ENCODE measurements at regions of chr1 and their contacts with region 1.

Region 1: DNA sequence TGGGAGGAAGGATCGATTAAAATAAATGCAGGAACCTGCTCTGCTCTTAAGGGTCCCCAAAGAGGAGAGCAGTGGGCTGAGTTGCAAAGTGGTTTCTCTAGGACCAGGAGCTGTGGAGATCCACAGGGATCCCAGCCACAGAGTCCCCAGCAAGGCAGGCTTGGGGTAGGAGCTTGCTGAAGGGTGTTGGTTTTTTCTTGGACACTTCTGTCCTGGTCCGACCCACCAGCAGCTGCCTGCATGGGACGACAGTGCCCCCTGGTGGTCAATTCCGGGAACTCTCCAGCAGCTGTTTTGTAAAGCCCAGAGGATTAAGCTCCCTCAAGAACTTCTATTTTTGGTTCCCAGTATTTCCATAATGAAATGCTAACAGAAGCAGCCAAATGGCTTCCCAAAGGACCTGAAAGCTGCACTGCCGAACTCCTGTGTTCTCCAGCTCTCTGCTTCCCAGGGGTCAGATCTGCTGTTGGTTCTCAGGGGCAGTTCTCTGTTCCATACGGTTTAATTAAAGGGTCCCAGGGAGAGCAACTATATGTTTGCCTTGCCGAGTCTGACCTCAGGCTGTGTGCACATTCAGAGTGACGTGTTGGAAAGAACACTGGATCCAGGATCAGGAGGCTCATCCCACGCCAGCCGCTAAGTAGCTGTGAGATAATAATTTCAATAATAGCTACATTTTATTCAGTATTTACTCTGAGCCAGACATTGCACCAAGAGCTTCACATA is 23.2 kb downstream of the NENF start:
- DNase-seq: peak; percentile 82 to 92
- H3K4me3 ChIP-seq: no peak overlapping the region
- H3K4me3 Mint-ChIP-seq: no peak overlapping the region
- H3K27ac Mint-ChIP-seq: no peak overlapping the region
- H3K4me1 ChIP-seq: peaks cover 3% of the 10 kb centered on the region; the same call in 1 of the 2 replicates
- H3K4me1 Mint-ChIP-seq: peaks cover 15% of the 10 kb centered on the region
- H3K27me3 ChIP-seq: no peaks in the 10 kb centered on the region
- H3K27me3 Mint-ChIP-seq: no peaks in the 10 kb centered on the region
- CTCF ChIP-seq: peak; percentile 98

Region 2: DNA sequence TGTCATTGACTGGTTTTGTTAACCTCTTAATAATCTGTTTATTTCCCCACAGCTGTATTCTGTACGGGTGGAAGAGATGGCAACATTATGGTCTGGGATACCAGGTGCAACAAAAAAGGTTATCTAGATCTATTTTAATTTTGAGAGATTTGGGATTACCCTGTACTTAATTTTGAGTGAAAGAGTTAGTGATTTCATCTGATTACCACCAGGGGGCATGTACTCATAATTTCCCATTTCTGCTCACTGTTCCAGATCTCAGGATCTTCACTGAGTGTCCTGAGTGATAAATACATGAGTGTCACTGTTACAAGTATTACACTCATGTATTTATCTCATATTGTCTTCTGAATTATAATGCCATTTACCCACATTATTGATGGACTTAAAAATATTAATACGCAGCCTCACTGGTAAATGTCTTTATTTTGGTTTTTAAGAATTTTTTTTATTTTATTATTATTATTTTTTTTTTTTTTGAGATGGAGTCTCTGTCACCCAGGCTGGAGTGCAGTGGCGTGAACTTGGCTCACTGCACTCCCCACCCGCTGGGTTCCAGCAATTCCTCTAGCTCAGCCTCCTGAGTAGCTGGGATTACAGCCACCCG is 393.0 kb before region 1 on chr1:
- CTCF ChIA-PET with region 1: interaction called, 22 read pairs
- POLR2A ChIA-PET with region 1: no interaction called
- intact Hi-C with region 1: loop called (anchors 1 kb)
- DNase-seq: peak in 1 of 2 experiments; percentile 13
- H3K4me3 ChIP-seq: no peak overlapping the region
- H3K4me3 Mint-ChIP-seq: no peak overlapping the region
- H3K27ac Mint-ChIP-seq: no peak overlapping the region
- H3K4me1 ChIP-seq: no peaks in the 10 kb centered on the region
- H3K4me1 Mint-ChIP-seq: no peaks in the 10 kb centered on the region
- H3K27me3 ChIP-seq: no peaks in the 10 kb centered on the region
- H3K27me3 Mint-ChIP-seq: no peaks in the 10 kb centered on the region
- CTCF ChIP-seq: peak; percentile 63 to 64

Region 3: DNA sequence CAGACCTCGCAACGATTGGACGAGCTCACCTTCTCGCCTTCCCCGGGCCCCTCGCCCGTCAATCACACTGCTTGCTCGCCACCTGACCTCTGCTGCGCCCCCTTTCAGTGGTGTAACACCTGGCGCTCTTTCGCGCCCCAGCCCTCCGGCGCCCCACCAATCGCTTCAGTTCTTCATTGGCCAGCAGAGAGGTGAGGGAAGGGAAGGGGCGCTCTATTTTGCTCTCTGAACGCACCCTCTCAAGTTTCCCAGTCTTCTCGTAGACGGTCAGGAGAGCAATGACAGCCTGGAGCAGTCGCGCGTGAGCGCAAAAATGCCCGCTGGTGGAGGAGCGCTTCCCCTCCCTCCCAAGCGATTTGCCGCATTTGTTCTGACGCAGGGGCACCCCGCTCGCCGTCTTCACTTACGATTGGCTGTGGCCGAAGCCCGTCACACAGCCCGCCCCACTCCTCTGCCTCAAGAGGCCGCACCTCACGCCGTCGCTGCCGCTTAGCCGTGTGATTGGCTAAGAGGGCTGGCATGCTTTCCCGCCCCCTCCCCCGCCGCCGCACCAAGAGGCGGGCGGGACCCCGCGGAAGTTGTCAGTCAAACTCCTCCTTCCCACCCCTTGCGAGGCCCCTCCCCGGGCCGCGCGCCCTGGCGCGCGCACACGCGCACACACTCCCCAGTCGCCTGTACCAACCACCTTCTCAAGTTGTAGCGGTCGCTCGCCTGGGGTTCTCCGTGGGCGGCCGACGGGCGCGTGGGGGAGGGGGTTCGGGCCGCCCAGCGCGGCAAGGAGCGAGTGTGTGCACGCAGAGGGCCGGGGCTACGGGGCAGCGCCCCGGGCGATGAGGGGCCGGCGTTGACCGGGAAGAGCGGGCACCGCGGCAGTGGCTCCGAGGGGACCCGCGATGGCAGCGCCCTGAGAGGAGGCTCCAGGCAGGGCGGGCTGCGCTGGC is 171.0 kb before region 1 on chr1 and contains the start of gene PPP2R5A:
- CTCF ChIA-PET with region 1: interaction called, 5 read pairs
- POLR2A ChIA-PET with region 1: no interaction called
- intact Hi-C with region 1: loop called (anchors 5 kb)
- DNase-seq: peak; percentile 99
- H3K4me3 ChIP-seq: peak within 1 kb of the TSS; percentile 57
- H3K4me3 Mint-ChIP-seq: peak within 1 kb of the TSS; percentile 95
- H3K27ac Mint-ChIP-seq: peak within 1 kb of the TSS; percentile 89
- H3K4me1 ChIP-seq: peaks cover 21% of the 10 kb centered on the region
- H3K4me1 Mint-ChIP-seq: peaks cover 13% of the 10 kb centered on the region
- H3K27me3 ChIP-seq: no peaks in the 10 kb centered on the region
- H3K27me3 Mint-ChIP-seq: no peaks in the 10 kb centered on the region
- CTCF ChIP-seq: peak; percentile 57 to 68
- total RNA-seq, gene PPP2R5A: 47.6 and 49.4 TPM in 2 replicates

Region 4: DNA sequence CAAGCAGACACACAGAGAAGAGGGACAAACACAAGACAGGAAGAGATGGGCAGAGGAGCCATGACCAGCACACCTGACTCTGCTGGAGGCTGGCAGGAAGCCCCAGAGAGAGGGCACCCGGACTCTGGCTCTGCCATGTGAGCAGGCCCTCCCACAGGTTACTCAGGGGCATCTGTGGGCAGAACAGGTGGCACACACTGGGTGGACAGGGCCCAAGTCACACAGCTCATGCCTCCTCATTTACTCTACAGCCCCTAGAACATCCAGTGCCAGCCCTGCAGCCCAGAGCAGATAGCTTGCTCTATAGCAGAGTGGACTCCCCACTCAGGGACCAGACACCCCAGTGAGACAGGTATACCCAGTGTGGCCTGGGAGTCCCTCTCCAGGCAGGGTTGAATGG is 69.9 kb before region 1 on chr1:
- CTCF ChIA-PET with region 1: interaction called, 5 read pairs
- POLR2A ChIA-PET with region 1: no interaction called
- intact Hi-C with region 1: loop called (anchors 5 kb)
- DNase-seq: no peak
- H3K4me3 ChIP-seq: no peak overlapping the region
- H3K4me3 Mint-ChIP-seq: no peak overlapping the region
- H3K27ac Mint-ChIP-seq: no peak overlapping the region
- H3K4me1 ChIP-seq: peaks cover 13% of the 10 kb centered on the region
- H3K4me1 Mint-ChIP-seq: peaks cover 12% of the 10 kb centered on the region
- H3K27me3 ChIP-seq: no peaks in the 10 kb centered on the region
- H3K27me3 Mint-ChIP-seq: no peaks in the 10 kb centered on the region
- CTCF ChIP-seq: no peak

Region 5: DNA sequence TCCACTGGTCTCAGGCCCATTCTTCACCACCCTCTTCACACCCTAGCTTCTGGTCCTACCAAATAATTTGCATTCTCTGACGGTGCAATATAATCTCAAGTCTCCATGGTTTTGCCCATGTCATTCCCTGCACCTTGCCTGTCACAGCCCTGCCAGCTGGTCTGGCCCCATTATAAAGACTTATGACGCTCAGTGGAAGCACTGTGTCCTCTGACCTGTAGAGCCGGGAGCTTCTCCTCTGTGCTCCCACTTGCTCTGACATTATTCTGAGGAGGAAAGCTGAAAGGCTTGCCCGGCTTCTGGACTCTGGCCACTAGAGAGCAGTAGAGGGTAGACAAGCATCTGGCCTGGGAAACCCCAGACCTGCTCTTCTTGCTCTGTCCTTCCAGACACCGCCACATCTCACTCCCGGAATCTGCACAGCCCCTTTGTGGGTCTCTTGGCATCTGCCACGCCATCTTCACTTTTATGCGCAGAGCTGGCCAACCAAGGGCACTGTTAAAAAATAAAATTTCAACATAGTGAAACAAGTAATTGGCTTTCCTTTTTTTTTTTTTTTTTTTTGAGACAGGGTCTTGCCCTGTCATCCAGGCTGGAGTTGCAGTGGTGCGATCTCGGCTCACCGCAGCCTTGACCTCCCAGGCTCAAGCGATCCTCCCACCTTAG is 21.2 kb after region 1 on chr1:
- CTCF ChIA-PET with region 1: interaction called, 19 read pairs
- POLR2A ChIA-PET with region 1: no interaction called
- intact Hi-C with region 1: no loop called
- DNase-seq: peak; percentile 88 to 91
- H3K4me3 ChIP-seq: no peak overlapping the region
- H3K4me3 Mint-ChIP-seq: no peak overlapping the region
- H3K27ac Mint-ChIP-seq: no peak overlapping the region
- H3K4me1 ChIP-seq: peaks cover 5% of the 10 kb centered on the region
- H3K4me1 Mint-ChIP-seq: peaks cover 7% of the 10 kb centered on the region
- H3K27me3 ChIP-seq: no peaks in the 10 kb centered on the region
- H3K27me3 Mint-ChIP-seq: no peaks in the 10 kb centered on the region
- CTCF ChIP-seq: peak; percentile 94 to 95

Measured in Caco-2 (cell line).